CD8-positive, alpha-beta T cell (primary cell): ENCODE measurements at regions of chr16 and their contacts with region 1.

Region 1: DNA sequence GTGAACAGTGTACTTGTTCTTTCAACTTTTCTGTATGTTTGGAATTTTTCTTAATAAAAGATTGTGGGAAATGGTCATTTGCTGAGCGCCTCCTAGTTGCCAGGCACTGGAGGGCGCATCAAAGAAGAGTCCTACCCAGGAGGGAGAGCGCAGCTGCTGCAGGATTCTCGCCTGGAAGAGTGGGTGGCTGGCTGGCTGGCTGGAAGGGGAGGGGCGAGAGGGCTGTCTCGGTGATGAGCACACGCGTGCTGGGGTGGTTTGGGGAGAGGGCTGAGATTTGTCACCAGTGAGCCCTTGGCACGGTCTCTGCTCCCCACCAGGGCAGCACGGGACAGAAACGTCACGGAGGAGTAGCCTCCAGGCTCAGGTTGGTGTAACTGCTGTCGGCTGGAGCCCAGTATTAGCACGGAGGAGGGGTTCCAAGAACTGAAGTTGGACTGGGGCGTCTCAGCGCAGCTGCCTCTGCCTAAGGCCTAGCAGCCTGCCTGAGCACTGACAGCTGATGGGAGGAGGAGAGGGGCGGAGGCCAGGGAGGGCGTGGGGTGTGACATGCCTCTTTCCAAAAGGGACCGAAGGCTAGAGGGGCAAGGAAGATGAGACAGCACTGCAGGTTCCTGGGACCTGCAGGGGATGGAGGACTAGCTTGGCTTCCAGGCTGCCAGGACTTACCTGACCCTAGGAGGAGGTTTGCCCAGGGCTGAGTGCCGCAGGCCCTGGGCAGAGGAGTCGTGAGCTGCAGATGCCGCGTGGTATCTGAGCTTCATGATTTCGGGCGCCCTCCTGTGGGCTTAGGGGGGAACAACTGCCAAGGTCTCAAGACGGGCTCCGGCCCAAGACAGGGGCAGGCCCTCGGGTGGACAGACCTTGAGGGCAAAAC is 5.7 kb downstream of the LDHD start:
- DNase-seq: peak; percentile 65 to 88 (median 81)
- ATAC-seq: peak; percentile 86
- H3K4me3 ChIP-seq: no peak overlapping the region
- H3K4me3 Mint-ChIP-seq: peak overlapping the region; percentile 32
- H3K27ac ChIP-seq: no peak overlapping the region
- H3K27ac Mint-ChIP-seq: no peak overlapping the region
- H3K4me1 ChIP-seq: peaks cover 25% of the 10 kb centered on the region
- H3K4me1 Mint-ChIP-seq: peaks cover 33% of the 10 kb centered on the region
- H3K27me3 ChIP-seq: peaks cover 0 to 6% of the 10 kb centered on the region in 2 experiments
- H3K27me3 Mint-ChIP-seq: peaks cover 9% of the 10 kb centered on the region
- CTCF ChIP-seq: peak; percentile 83

Region 2: GRCh38 chr16:74623214-74623842 is 487.5 kb before region 1 on chr16:
- CTCF ChIA-PET with region 1: no interaction called
- POLR2A ChIA-PET with region 1: no interaction called
- intact Hi-C with region 1: no loop called
- DNase-seq: peak in 2 of 9 experiments; percentile 56 to 69
- ATAC-seq: peak; percentile 38
- H3K4me3 ChIP-seq: no peak overlapping the region
- H3K4me3 Mint-ChIP-seq: no peak overlapping the region
- H3K27ac ChIP-seq: no peak overlapping the region
- H3K27ac Mint-ChIP-seq: no peak overlapping the region
- H3K4me1 ChIP-seq: no peaks in the 10 kb centered on the region
- H3K4me1 Mint-ChIP-seq: peaks cover 2% of the 10 kb centered on the region
- H3K27me3 ChIP-seq: no peaks in the 10 kb centered on the region
- H3K27me3 Mint-ChIP-seq: no peaks in the 10 kb centered on the region
- CTCF ChIP-seq: peak; percentile 65

Region 3: GRCh38 chr16:74813109-74813641 is 297.7 kb before region 1 on chr16:
- CTCF ChIA-PET with region 1: interaction called, 15 read pairs
- POLR2A ChIA-PET with region 1: no interaction called
- intact Hi-C with region 1: loop called in 1 of 2 experiments (anchors 1 kb)
- DNase-seq: peak; percentile 44 to 80 (median 66)
- ATAC-seq: peak; percentile 99
- H3K4me3 ChIP-seq: no peak overlapping the region
- H3K4me3 Mint-ChIP-seq: no peak overlapping the region
- H3K27ac ChIP-seq: no peak overlapping the region
- H3K27ac Mint-ChIP-seq: no peak overlapping the region
- H3K4me1 ChIP-seq: peaks cover 3% of the 10 kb centered on the region
- H3K4me1 Mint-ChIP-seq: peaks cover 4% of the 10 kb centered on the region
- H3K27me3 ChIP-seq: no peaks in the 10 kb centered on the region
- H3K27me3 Mint-ChIP-seq: no peaks in the 10 kb centered on the region
- CTCF ChIP-seq: peak; percentile 85

Region 4: GRCh38 chr16:75007443-75007842 is 103.4 kb before region 1 on chr16:
- CTCF ChIA-PET with region 1: interaction called, 23 read pairs
- POLR2A ChIA-PET with region 1: no interaction called
- intact Hi-C with region 1: no loop called
- DNase-seq: no peak
- ATAC-seq: no peak
- H3K4me3 ChIP-seq: no peak overlapping the region
- H3K4me3 Mint-ChIP-seq: no peak overlapping the region
- H3K27ac ChIP-seq: no peak overlapping the region
- H3K27ac Mint-ChIP-seq: no peak overlapping the region
- H3K4me1 ChIP-seq: no peaks in the 10 kb centered on the region
- H3K4me1 Mint-ChIP-seq: peaks cover 10% of the 10 kb centered on the region
- H3K27me3 ChIP-seq: peaks cover 0 to 3% of the 10 kb centered on the region in 2 experiments
- H3K27me3 Mint-ChIP-seq: no peaks in the 10 kb centered on the region
- CTCF ChIP-seq: no peak

Region 5: GRCh38 chr16:75074920-75075687 is 35.8 kb before region 1 on chr16:
- CTCF ChIA-PET with region 1: interaction called, 17 read pairs
- POLR2A ChIA-PET with region 1: interaction called, 4 read pairs
- intact Hi-C with region 1: loop called (anchors 1 to 2 kb)
- DNase-seq: peak; percentile 61 to 93 (median 84)
- ATAC-seq: peak; percentile 94
- H3K4me3 ChIP-seq: no peak overlapping the region
- H3K4me3 Mint-ChIP-seq: peak overlapping the region; percentile 62
- H3K27ac ChIP-seq: no peak overlapping the region
- H3K27ac Mint-ChIP-seq: peak overlapping the region; percentile 72
- H3K4me1 ChIP-seq: peaks cover 28% of the 10 kb centered on the region
- H3K4me1 Mint-ChIP-seq: peaks cover 56% of the 10 kb centered on the region
- H3K27me3 ChIP-seq: peaks cover 0 to 3% of the 10 kb centered on the region in 2 experiments
- H3K27me3 Mint-ChIP-seq: no peaks in the 10 kb centered on the region
- CTCF ChIP-seq: no peak

Region 6: GRCh38 chr16:75121949-75122568 is 11.2 kb after region 1 on chr16:
- CTCF ChIA-PET with region 1: interaction called, 14 read pairs
- POLR2A ChIA-PET with region 1: no interaction called
- intact Hi-C with region 1: no loop called
- DNase-seq: no peak
- ATAC-seq: no peak
- H3K4me3 ChIP-seq: no peak overlapping the region
- H3K4me3 Mint-ChIP-seq: no peak overlapping the region
- H3K27ac ChIP-seq: no peak overlapping the region
- H3K27ac Mint-ChIP-seq: no peak overlapping the region
- H3K4me1 ChIP-seq: no peaks in the 10 kb centered on the region
- H3K4me1 Mint-ChIP-seq: no peaks in the 10 kb centered on the region
- H3K27me3 ChIP-seq: no peaks in the 10 kb centered on the region
- H3K27me3 Mint-ChIP-seq: no peaks in the 10 kb centered on the region
- CTCF ChIP-seq: no peak

Region 7: GRCh38 chr16:75181630-75182029 is 70.8 kb after region 1 on chr16:
- CTCF ChIA-PET with region 1: no interaction called
- POLR2A ChIA-PET with region 1: no interaction called
- intact Hi-C with region 1: no loop called
- DNase-seq: no peak
- ATAC-seq: no peak
- H3K4me3 ChIP-seq: no peak overlapping the region
- H3K4me3 Mint-ChIP-seq: no peak overlapping the region
- H3K27ac ChIP-seq: no peak overlapping the region
- H3K27ac Mint-ChIP-seq: no peak overlapping the region
- H3K4me1 ChIP-seq: no peaks in the 10 kb centered on the region
- H3K4me1 Mint-ChIP-seq: no peaks in the 10 kb centered on the region
- H3K27me3 ChIP-seq: no peaks in the 10 kb centered on the region
- H3K27me3 Mint-ChIP-seq: peaks cover 5% of the 10 kb centered on the region
- CTCF ChIP-seq: no peak